HCT116 (cell line): ENCODE measurements at regions of chr9 and their contacts with region 1.

Region 1: GRCh38 chr9:113591001-113591898 is 127.7 kb downstream of the RGS3 start:
- DNase-seq: no peak
- ATAC-seq: peak; percentile 78
- H3K4me3 ChIP-seq: no peak overlapping the region
- H3K27ac ChIP-seq: no peak overlapping the region
- H3K4me1 ChIP-seq: peaks cover 9 to 16% of the 10 kb centered on the region in 2 experiments
- H3K27me3 ChIP-seq: no peaks in the 10 kb centered on the region
- CTCF ChIP-seq: peak; percentile 90 to 96 (median 91)
- POLR2A ChIP-seq: no peak
- RAD21 ChIP-seq: peak; percentile 98

Region 2: DNA sequence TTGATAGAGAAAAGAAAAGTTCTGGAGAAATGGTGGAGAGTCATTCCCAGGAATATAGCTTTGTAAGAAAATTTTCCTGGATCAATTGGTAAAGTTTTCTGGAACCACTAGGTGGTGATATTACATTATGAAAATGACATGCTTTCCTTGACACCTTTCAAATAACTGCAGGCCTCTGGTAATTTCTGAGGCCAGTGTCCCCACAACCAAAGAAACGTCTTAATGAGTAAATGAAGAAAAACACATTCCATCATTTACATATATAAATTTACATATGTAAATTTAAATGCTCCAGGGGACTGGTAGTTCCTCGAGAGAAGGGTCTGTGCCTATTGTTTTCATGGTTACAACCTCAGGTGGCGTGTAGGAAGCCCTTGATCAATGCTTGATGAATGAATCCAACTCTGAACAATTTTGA is 144.9 kb before region 1 on chr9:
- CTCF ChIA-PET with region 1: interaction called, 16 read pairs
- POLR2A ChIA-PET with region 1: no interaction called
- RAD21 ChIA-PET with region 1: interaction called in 1 of 2 experiments, 7 read pairs
- intact Hi-C with region 1: loop called (anchors 2 kb)
- DNase-seq: peak; percentile 31
- ATAC-seq: peak; percentile 76
- H3K4me3 ChIP-seq: no peak overlapping the region
- H3K27ac ChIP-seq: no peak overlapping the region
- H3K4me1 ChIP-seq: no peaks in the 10 kb centered on the region
- H3K27me3 ChIP-seq: no peaks in the 10 kb centered on the region
- CTCF ChIP-seq: peak; percentile 43 to 86 (median 67)
- POLR2A ChIP-seq: no peak
- RAD21 ChIP-seq: peak; percentile 90

Region 3: GRCh38 chr9:113602126-113603044 is 11.1 kb after region 1 on chr9:
- CTCF ChIA-PET with region 1: interaction called, 23 read pairs
- POLR2A ChIA-PET with region 1: interaction called, 5 read pairs
- RAD21 ChIA-PET with region 1: interaction called in 1 of 2 experiments, 5 read pairs
- intact Hi-C with region 1: no loop called
- DNase-seq: peak; percentile 53
- ATAC-seq: peak; percentile 91
- H3K4me3 ChIP-seq: peak overlapping the region; percentile 4 to 44; a peak in 2 of 4 replicates
- H3K27ac ChIP-seq: peak overlapping the region; percentile 48; the same call in 1 of the 2 replicates
- H3K4me1 ChIP-seq: peaks cover 20 to 43% of the 10 kb centered on the region in 2 experiments
- H3K27me3 ChIP-seq: no peaks in the 10 kb centered on the region
- CTCF ChIP-seq: no peak
- POLR2A ChIP-seq: no peak
- RAD21 ChIP-seq: no peak